ENCODE measurements at regions of chr17 and their contacts with region 1.

Region 1: GRCh38 chr17:75182569-75183450 is at the start of gene SUMO2:
- DNase-seq: peak; percentile 96
- H3K4me3 ChIP-seq: peak within 1 kb of the TSS; percentile 69 to 95 (median 88)
- H3K27ac ChIP-seq: peak within 1 kb of the TSS; percentile 85
- H3K4me1 ChIP-seq: peaks cover 10% of the 10 kb centered on the region
- H3K27me3 ChIP-seq: no peaks in the 10 kb centered on the region
- CTCF ChIP-seq: peak in 1 of 2 donors; percentile 42
- POLR2A ChIP-seq: peak; percentile 73
- total RNA-seq, gene SUMO2: 424 and 437 TPM in 2 replicates

Region 2: GRCh38 chr17:75046582-75047289 is 136.1 kb before region 1 on chr17 and contains the starts of genes ATP5PD and KCTD2:
- CTCF ChIA-PET with region 1: no interaction called
- POLR2A ChIA-PET with region 1: interaction called, 3 read pairs
- dilution Hi-C with region 1: no loop called
- intact Hi-C with region 1: loop called (anchors 5 kb)
- DNase-seq: peak; percentile 98
- H3K4me3 ChIP-seq: peak within 1 kb of the TSS; percentile 58 to 93 (median 67)
- H3K27ac ChIP-seq: peak within 1 kb of the TSS; percentile 19
- H3K4me1 ChIP-seq: peaks cover 13% of the 10 kb centered on the region
- H3K27me3 ChIP-seq: no peaks in the 10 kb centered on the region
- CTCF ChIP-seq: no peak
- POLR2A ChIP-seq: peak; percentile 93
- total RNA-seq, gene ATP5PD: 200 and 202 TPM in 2 replicates
- total RNA-seq, gene KCTD2: 20.6 and 23.2 TPM in 2 replicates

Region 3: DNA sequence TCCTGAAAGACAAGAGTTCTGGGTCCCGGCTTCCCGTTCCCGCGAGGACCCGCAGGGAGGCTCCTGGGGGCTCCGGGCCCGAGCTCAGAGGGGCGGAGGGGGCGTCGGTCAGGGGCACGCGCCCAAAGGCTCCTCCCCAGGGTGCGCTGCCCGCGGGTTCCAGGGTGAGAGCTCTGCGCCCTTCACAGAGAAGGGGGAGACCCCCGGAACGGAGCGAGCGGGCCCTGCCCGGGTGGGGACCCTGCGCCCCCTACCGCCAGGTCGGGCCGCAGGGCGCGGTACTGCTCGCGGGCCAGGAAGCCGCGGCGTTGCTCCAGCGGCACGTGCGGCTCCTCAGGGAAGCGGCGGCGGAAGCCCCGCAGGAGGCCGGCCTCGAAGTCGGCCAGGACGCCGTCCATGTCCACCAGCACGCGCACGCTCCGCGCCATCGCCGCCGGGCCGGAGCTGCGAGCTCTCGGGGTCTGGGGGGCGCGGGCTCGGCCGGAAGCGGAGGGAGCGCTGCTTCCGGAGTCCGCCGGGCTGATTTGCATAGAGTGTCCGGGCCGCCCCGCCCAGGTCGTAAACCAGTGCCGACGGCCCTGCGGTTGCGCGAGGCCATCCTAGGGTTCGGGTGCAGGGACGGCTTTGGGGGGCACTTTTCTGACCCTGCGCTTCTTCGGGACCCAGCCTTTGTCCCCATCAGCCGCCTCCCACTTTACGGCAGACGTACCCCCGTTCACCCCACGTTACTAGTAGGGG is 51.4 kb before region 1 on chr17 and contains the start of gene NT5C:
- CTCF ChIA-PET with region 1: interaction called, 5 read pairs
- POLR2A ChIA-PET with region 1: no interaction called
- dilution Hi-C with region 1: no loop called
- intact Hi-C with region 1: loop called (anchors 2 kb)
- DNase-seq: peak; percentile 73
- H3K4me3 ChIP-seq: peak within 1 kb of the TSS; percentile 47 to 53 (median 50)
- H3K27ac ChIP-seq: peak within 1 kb of the TSS; percentile 51
- H3K4me1 ChIP-seq: peaks cover 9% of the 10 kb centered on the region
- H3K27me3 ChIP-seq: no peaks in the 10 kb centered on the region
- CTCF ChIP-seq: peak; percentile 72
- POLR2A ChIP-seq: peak; percentile 83
- total RNA-seq, gene NT5C: 32.6 and 39.2 TPM in 2 replicates

Region 4: DNA sequence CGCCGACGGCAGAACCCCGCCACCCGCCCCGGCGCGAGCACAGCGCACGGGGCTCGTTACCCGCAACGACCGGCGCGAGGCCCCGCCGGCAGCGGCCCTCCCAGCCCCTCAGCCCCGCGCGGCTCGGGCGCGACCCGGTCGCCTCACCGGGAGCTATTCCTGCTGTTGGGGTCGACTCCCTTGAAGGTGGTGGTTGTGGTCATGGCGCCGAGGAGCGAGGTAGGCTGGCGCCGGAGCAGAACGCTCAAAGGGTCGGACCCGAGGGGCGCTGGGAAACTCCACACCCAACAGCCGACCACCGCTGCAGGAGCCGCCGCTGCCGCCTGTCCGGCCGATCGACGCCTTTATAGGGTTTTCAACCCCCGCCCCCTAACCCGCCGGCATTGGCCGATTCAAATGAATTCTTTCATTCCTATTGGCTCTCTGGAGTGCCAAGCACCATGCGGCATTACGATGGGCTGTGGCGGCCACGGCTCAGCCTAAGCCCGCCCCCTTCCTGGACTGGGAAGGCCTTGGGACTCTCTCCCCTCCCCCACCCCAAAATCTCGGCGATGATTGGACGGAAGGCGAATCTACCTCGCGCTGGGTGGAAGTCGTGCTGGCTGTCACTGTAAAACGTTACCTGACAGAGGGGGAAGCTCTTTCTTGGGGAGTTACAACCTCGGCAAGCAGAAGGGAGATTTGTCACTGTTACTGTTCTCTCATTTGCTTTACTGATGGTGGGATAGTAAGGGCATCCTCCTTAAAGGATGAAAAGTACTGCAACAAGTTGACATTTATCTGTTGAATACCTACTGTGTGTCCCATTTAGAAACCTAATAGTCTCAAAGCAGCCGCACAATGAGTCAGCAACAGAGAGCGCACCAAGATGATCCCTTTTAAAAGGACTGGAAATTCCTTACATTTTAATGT is 28.4 kb before region 1 on chr17 and contains the start of gene JPT1:
- CTCF ChIA-PET with region 1: no interaction called
- POLR2A ChIA-PET with region 1: no interaction called
- dilution Hi-C with region 1: no loop called
- intact Hi-C with region 1: loop called (anchors 1 kb)
- DNase-seq: peak; percentile 99
- H3K4me3 ChIP-seq: peak within 1 kb of the TSS; percentile 57 to 83 (median 62)
- H3K27ac ChIP-seq: peak within 1 kb of the TSS; percentile 60
- H3K4me1 ChIP-seq: peaks cover 27% of the 10 kb centered on the region
- H3K27me3 ChIP-seq: no peaks in the 10 kb centered on the region
- CTCF ChIP-seq: no peak
- POLR2A ChIP-seq: peak; percentile 100
- total RNA-seq, gene JPT1: 352 and 364 TPM in 2 replicates

Region 5: DNA sequence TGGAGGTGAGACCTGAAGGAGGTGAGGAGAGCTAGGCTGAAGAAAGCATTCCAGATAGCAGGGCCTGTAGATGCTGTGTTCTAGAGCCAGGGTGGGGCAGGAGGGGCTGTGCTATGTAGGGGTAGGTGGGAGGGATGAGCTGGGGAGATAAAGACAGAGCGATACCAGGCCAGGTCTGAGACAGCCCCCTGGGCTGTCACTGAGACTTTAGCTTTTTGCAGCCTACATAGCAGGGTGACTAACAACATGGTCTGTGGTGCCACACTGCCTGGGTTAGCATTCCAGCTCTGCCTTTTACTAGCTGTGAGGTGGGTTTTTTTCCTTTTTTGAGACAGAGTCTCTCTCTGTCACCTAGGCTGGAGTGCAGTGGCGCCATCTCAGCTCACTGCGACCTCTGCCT is 37.0 kb after region 1 on chr17:
- CTCF ChIA-PET with region 1: no interaction called
- POLR2A ChIA-PET with region 1: no interaction called
- dilution Hi-C with region 1: no loop called
- intact Hi-C with region 1: no loop called
- DNase-seq: no peak
- H3K4me3 ChIP-seq: no peak overlapping the region
- H3K27ac ChIP-seq: no peak overlapping the region
- H3K4me1 ChIP-seq: no peaks in the 10 kb centered on the region
- H3K27me3 ChIP-seq: no peaks in the 10 kb centered on the region
- CTCF ChIP-seq: no peak
- POLR2A ChIP-seq: no peak

Region 6: GRCh38 chr17:75301502-75302206 is 118.8 kb after region 1 on chr17:
- CTCF ChIA-PET with region 1: no interaction called
- POLR2A ChIA-PET with region 1: no interaction called
- dilution Hi-C with region 1: no loop called
- intact Hi-C with region 1: no loop called
- DNase-seq: no peak
- H3K4me3 ChIP-seq: no peak overlapping the region
- H3K27ac ChIP-seq: no peak overlapping the region
- H3K4me1 ChIP-seq: no peaks in the 10 kb centered on the region
- H3K27me3 ChIP-seq: no peaks in the 10 kb centered on the region
- CTCF ChIP-seq: no peak
- POLR2A ChIP-seq: no peak